A673 (cell line): ENCODE measurements at regions of chr11 and their contacts with region 1.

Region 1: GRCh38 chr11:5600374-5600851 is 4.0 kb downstream of the TRIM6 start:
- DNase-seq: peak; percentile 76
- H3K4me3 ChIP-seq: no peak overlapping the region
- H3K27ac ChIP-seq: no peak overlapping the region
- H3K4me1 ChIP-seq: no peaks in the 10 kb centered on the region
- H3K27me3 ChIP-seq: no peaks in the 10 kb centered on the region
- CTCF ChIP-seq: peak; percentile 78

Region 2: GRCh38 chr11:5046754-5047370 is 553.6 kb before region 1 on chr11:
- CTCF ChIA-PET with region 1: no interaction called
- POLR2A ChIA-PET with region 1: no interaction called
- intact Hi-C with region 1: no loop called
- DNase-seq: no peak
- H3K4me3 ChIP-seq: no peak overlapping the region
- H3K27ac ChIP-seq: no peak overlapping the region
- H3K4me1 ChIP-seq: no peaks in the 10 kb centered on the region
- H3K27me3 ChIP-seq: no peaks in the 10 kb centered on the region
- CTCF ChIP-seq: no peak

Region 3: GRCh38 chr11:5891216-5891800 is 290.9 kb after region 1 on chr11:
- CTCF ChIA-PET with region 1: interaction called, 3 read pairs
- POLR2A ChIA-PET with region 1: no interaction called
- intact Hi-C with region 1: loop called (anchors 10 kb)
- DNase-seq: peak; percentile 6
- H3K4me3 ChIP-seq: no peak overlapping the region
- H3K27ac ChIP-seq: no peak overlapping the region
- H3K4me1 ChIP-seq: no peaks in the 10 kb centered on the region
- H3K27me3 ChIP-seq: no peaks in the 10 kb centered on the region
- CTCF ChIP-seq: peak; percentile 49